ENCODE measurements at regions of chr1 and their contacts with region 1.

Region 1: GRCh38 chr1:37999430-38000232 is 5.7 kb downstream of the FHL3 start:
- DNase-seq: no peak
- H3K4me3 ChIP-seq: peak overlapping the region; percentile 47
- H3K27ac ChIP-seq: peak overlapping the region; percentile 99
- H3K27me3 ChIP-seq: no peaks in the 10 kb centered on the region
- CTCF ChIP-seq: no peak

Region 2: GRCh38 chr1:37133276-37134145 is 866.1 kb before region 1 on chr1:
- CTCF ChIA-PET with region 1: no interaction called
- POLR2A ChIA-PET with region 1: no interaction called
- DNase-seq: no peak
- H3K4me3 ChIP-seq: no peak overlapping the region
- H3K27ac ChIP-seq: no peak overlapping the region
- H3K27me3 ChIP-seq: no peaks in the 10 kb centered on the region
- CTCF ChIP-seq: no peak

Region 3: GRCh38 chr1:38012363-38013226 is 13.0 kb after region 1 on chr1 and contains the start of gene UTP11:
- CTCF ChIA-PET with region 1: interaction called, 179 read pairs
- POLR2A ChIA-PET with region 1: interaction called, 21 read pairs
- DNase-seq: peak; percentile 97
- H3K4me3 ChIP-seq: peak within 1 kb of the TSS; percentile 92
- H3K27ac ChIP-seq: peak within 1 kb of the TSS; percentile 99
- H3K27me3 ChIP-seq: no peaks in the 10 kb centered on the region
- CTCF ChIP-seq: no peak
- polyA plus RNA-seq, gene UTP11: 32.9 and 43.8 TPM in 2 replicates

Region 4: DNA sequence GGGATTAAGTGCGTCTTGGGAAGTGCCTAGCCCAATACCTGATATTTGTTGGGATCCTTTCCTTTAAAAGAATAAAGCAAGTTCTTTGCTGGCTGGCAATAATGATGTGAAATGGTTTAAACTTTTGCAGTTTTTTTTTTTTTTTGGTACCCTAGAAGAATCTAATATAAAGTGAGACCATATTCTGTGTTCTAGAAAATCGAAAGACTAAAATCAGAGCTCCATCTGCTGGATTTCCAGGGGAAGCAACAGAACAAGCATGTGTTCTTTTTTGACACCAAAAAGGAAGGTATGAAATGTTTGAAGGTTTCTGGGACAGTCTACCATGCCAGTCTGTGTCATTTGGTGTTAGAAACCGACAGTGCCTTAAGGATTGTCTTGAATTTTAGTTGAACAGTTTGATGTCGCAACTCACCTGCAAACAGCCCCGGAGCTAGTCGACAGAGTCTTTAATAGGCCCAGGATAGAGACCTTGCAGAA is 19.3 kb after region 1 on chr1:
- CTCF ChIA-PET with region 1: interaction called, 179 read pairs
- POLR2A ChIA-PET with region 1: interaction called, 5 read pairs
- DNase-seq: no peak
- H3K4me3 ChIP-seq: no peak overlapping the region
- H3K27ac ChIP-seq: no peak overlapping the region
- H3K27me3 ChIP-seq: no peaks in the 10 kb centered on the region
- CTCF ChIP-seq: peak; percentile 73

Measured in AG04450 (cell line).